ENCODE measurements at regions of chr12 and their contacts with region 1.

Region 1: GRCh38 chr12:6062757-6063735 is 61.4 kb downstream of the VWF start:
- DNase-seq: peak; percentile 60
- H3K4me3 ChIP-seq: no peak overlapping the region
- H3K27ac ChIP-seq: no peak overlapping the region
- H3K4me1 ChIP-seq: no peaks in the 10 kb centered on the region
- H3K27me3 ChIP-seq: no peaks in the 10 kb centered on the region
- CTCF ChIP-seq: peak; percentile 77

Region 2: GRCh38 chr12:6195665-6196535 is 132.9 kb after region 1 on chr12:
- CTCF ChIA-PET with region 1: no interaction called
- POLR2A ChIA-PET with region 1: no interaction called
- intact Hi-C with region 1: loop called (anchors 10 kb)
- DNase-seq: peak; percentile 78
- H3K4me3 ChIP-seq: no peak overlapping the region
- H3K27ac ChIP-seq: no peak overlapping the region
- H3K4me1 ChIP-seq: no peaks in the 10 kb centered on the region
- H3K27me3 ChIP-seq: peaks cover 7% of the 10 kb centered on the region
- CTCF ChIP-seq: peak; percentile 86

Region 3: GRCh38 chr12:6285063-6285477 is 222.0 kb after region 1 on chr12:
- CTCF ChIA-PET with region 1: no interaction called
- POLR2A ChIA-PET with region 1: no interaction called
- intact Hi-C with region 1: loop called (anchors 1 kb)
- DNase-seq: peak; percentile 82
- H3K4me3 ChIP-seq: no peak overlapping the region
- H3K27ac ChIP-seq: no peak overlapping the region
- H3K4me1 ChIP-seq: no peaks in the 10 kb centered on the region
- H3K27me3 ChIP-seq: no peaks in the 10 kb centered on the region
- CTCF ChIP-seq: peak; percentile 93

Measured in A673 (cell line).